Head of caudate nucleus (tissue), 42 donors: ENCODE measurements at regions of chr4 and their contacts with region 1.

Region 1: DNA sequence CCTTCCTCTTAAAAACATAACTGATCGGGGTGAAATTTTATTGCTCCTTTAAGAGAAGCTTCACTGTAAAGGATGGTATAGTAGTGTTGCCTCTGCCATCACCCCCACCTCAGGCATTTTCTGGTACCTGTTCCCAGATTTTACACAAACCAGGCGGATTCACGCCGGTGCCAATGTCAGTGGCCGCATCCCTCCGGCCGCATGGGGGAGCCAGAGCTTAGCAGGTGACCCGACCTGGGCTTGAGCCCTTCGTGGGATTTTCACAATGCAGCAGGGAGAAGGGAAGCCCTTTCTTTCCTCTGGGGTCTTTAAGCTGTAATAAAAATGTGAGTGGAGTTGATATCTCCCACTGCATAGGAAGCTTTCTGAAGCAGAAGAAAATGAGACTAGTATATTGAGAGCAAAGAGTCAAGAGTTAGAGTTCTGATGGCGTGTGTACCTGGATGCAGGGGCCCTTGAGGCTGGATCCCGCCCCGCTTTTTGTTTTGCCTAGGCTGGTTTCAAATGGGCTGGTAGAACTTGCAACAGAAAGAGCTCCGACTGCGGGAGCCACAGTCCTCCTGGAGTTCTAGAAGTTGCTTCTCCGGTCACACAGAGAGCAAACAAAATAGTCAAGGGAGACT is 59.4 kb downstream of the POLR2B start:
- DNase-seq: peak; percentile 68 to 89 (median 78)

Region 2: GRCh38 chr4:56613101-56613862 is 424.8 kb before region 1 on chr4:
- intact Hi-C with region 1: no loop called
- DNase-seq: no peak

Region 3: DNA sequence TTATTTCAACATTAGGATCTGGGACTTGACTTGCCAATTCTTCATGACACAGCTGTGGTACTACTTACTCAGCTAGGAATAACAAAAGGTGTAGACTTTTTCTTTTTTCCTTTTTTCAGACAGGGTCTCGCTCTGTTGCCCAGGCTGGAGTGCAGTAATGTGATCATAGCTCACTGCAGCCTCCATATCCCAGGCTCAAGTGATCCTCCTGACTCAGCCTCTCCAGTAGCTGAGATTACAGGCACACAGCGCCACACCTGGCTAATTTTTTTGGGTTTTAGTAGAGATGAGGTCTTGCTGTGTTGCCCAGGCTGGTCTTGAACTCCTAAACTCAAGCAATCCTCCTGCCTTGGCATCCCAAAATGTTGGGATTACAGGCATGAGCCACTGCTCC is 77.0 kb before region 1 on chr4:
- intact Hi-C with region 1: no loop called
- DNase-seq: peak in 1 of 42 donors; percentile 8

Region 4: DNA sequence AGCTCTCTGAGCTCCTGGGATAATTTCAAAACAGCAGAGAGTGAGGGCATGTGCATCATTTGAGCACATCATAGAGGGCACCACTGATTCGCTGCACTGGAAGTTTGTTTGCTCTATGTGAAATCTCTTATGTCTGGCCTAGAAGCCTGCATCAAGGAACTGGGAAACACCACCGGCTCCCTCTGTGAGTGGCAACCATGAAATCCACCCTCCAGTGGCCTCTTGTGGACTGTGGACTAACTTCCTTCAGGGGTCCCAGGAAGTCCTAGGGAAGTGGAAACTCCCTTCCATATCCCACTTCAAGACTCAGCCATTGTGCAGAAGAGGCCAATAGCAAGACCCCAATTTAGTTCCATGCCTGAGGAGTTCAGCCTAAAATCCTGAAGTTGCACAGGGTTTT is 120.1 kb after region 1 on chr4:
- intact Hi-C with region 1: loop called (anchors 10 kb)
- DNase-seq: peak in 1 of 42 donors; percentile 29